ENCODE measurements at regions of chr1 and their contacts with region 1.

Region 1: GRCh38 chr1:233721141-233721547 is 107.2 kb downstream of the KCNK1 start:
- DNase-seq: no peak
- ATAC-seq: peak; percentile 30 to 31
- H3K4me3 ChIP-seq: no peak overlapping the region
- H3K27ac ChIP-seq: peak overlapping the region; percentile 96
- H3K4me1 ChIP-seq: no peaks in the 10 kb centered on the region
- H3K27me3 ChIP-seq: no peaks in the 10 kb centered on the region

Region 2: GRCh38 chr1:233518349-233518748 is 202.8 kb before region 1 on chr1:
- intact Hi-C with region 1: no loop called
- DNase-seq: no peak
- ATAC-seq: no peak
- H3K4me3 ChIP-seq: no peak overlapping the region
- H3K27ac ChIP-seq: no peak overlapping the region
- H3K4me1 ChIP-seq: no peaks in the 10 kb centered on the region
- H3K27me3 ChIP-seq: no peaks in the 10 kb centered on the region

Region 3: GRCh38 chr1:233668725-233669294 is 52.3 kb before region 1 on chr1:
- intact Hi-C with region 1: loop called in 1 of 4 experiments (anchors 10 kb)
- DNase-seq: peak in 1 of 3 donors; percentile 36
- ATAC-seq: peak; percentile 78 to 84
- H3K4me3 ChIP-seq: no peak overlapping the region
- H3K27ac ChIP-seq: no peak overlapping the region
- H3K4me1 ChIP-seq: no peaks in the 10 kb centered on the region
- H3K27me3 ChIP-seq: no peaks in the 10 kb centered on the region

Region 4: DNA sequence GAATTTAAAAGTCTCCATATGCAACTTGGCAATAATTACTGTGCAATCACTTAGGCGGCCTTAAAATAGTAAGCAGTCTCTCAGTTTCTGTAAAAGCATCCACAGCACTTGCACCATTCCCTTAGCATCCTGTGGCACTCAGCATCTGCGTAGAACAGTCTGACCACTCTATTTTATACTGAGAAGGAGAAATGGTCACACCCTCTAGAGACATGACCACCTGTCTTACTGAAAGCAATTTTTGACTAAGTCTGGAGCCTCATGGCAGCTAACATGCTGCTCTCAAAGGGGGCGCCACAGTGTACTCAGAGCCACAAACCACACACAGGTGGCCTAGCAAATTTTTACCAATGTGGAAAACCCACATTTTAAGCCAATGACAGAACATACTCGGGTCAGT is 45.3 kb before region 1 on chr1:
- intact Hi-C with region 1: loop called in 1 of 4 experiments (anchors 5 kb)
- DNase-seq: no peak
- ATAC-seq: peak in 1 of 2 donors; percentile 4
- H3K4me3 ChIP-seq: no peak overlapping the region
- H3K27ac ChIP-seq: peak overlapping the region; percentile 70
- H3K4me1 ChIP-seq: no peaks in the 10 kb centered on the region
- H3K27me3 ChIP-seq: no peaks in the 10 kb centered on the region

Region 5: DNA sequence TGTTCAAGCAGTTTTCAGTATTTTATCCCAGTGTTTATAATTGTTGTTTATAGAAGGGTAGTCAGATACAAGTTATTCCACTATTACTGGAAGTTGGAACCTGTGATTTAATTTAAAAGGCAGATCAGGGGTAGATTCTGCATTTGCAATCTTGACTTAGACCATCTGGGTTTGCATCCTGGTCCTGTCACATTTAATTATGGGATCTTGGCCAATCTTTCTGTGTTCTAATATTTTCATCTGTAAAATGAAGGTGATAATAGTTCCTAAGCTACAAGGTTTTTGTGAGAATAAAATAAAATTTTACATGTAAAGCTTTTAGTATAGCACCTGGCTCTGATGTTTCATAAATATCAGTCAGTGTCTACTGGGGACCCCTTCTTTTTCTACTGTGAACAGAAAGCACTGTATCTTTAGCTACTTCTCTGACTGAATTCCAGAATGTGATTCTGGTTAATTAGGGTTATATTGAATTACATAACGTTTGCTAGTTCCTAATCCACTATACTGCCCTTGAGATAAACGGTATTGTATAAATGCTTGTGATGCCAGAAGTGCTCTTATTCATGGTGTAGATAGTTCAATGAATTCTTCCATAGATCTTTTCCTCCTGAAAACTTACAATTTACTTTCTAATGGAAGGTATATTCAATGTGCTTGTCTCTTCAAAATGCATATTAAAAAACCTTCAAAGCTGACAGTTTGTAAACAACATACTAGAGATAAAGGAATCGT is 23.8 kb after region 1 on chr1:
- intact Hi-C with region 1: no loop called
- DNase-seq: no peak
- ATAC-seq: no peak
- H3K4me3 ChIP-seq: no peak overlapping the region
- H3K27ac ChIP-seq: no peak overlapping the region
- H3K4me1 ChIP-seq: no peaks in the 10 kb centered on the region
- H3K27me3 ChIP-seq: no peaks in the 10 kb centered on the region

Measured in right cardiac atrium (tissue), 5 donors.